Transverse colon (tissue), 4 donors: ENCODE measurements at regions of chr11 and their contacts with region 1.

Region 1: DNA sequence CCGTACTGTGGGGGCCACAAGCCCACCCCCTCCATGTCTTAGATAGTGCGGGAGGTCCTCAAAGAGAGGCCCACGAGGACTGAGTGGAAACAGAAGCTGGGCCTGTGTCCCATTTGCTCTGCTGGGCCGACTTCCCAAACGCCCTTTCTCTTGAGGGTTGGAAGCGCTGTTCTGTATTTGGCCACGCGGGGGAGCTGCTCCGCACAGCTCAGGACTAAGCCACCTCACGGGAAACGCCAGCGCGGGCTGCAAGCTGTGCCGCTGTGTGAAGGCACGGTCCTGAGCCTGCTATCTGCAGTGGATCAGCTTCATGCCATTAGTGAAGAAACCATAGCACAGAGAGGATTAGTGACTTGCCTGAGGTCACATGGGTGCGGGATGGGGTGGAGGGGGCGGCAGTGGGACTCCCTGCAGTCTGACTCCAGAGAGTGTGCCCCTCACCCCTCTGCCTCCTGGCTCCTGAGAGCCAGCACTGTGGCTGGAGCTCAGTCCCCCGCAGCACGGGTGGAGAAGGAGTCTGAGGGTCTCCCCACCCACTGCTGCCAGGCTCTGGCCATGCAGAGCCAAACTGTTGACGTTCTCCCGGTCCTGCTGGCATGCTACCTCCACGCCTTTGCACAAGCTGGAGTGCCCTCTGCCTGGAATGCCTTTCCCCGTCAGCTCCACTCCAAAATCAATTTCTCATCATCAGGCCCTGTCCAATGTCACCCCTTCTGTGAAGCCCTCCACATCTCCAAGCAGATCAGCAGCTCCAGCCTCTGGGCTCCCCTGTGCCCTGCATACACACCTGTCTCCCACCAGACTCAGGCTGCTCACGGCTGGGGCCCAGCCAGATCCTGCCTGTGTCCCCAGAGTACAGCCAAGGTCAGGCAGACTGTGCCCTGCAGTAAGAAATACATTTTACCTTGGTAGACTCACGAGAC is 51.5 kb upstream of the LRRC32 start:
- DNase-seq: peak; percentile 87
- H3K4me3 ChIP-seq: no peak overlapping the region
- H3K27ac ChIP-seq: no peak overlapping the region
- H3K4me1 ChIP-seq: peaks cover 0 to 7% (median 4%) of the 10 kb centered on the region in 4 donors
- H3K27me3 ChIP-seq: peaks cover 12% of the 10 kb centered on the region
- CTCF ChIP-seq: peak; percentile 75 to 91 (median 87)
- EP300 ChIP-seq: no peak
- POLR2A ChIP-seq: no peak

Region 2: DNA sequence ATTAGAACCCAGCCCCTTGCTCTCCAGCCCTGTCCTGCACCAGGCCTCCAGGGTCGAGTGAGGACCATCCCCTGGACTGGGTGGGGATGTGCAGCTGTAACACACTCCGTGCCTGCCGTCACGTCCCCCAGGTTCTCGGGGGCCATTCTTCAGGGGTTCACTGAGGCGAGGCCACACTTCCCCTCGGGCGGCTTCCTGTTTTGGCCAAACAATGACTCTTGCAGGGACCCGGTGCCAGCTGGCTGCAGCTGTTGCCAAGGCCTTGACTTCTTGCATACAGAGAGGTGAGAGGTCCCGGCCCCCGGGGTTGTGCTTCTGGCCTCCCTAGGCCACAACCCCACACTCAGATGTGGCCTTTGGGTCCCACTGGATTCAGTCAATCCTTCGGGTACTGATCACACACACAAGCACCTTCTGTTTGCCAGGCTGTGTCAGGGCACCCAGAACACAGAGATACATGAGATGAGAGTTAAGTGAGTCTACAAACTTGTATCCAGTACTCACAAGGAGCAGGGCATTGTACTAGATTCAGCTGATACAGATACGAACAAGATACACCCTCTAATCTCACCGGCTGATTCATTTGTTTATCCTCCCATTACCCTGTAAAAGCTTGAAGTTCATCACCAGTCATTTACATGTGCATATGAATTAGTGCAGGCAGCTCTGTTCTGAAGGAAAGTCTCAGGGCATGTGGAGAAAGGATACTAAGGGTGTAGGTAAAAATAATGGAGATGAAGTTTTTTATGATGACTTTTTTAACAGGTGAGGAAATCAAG is 84.3 kb before region 1 on chr11:
- in situ Hi-C with region 1: no loop called
- intact Hi-C with region 1: no loop called
- DNase-seq: peak; percentile 32
- H3K4me3 ChIP-seq: no peak overlapping the region
- H3K27ac ChIP-seq: no peak overlapping the region
- H3K4me1 ChIP-seq: peaks cover 0 to 6% (median 0%) of the 10 kb centered on the region in 4 donors
- H3K27me3 ChIP-seq: no peaks in the 10 kb centered on the region
- CTCF ChIP-seq: no peak
- EP300 ChIP-seq: no peak
- POLR2A ChIP-seq: no peak

Region 3: GRCh38 chr11:76744186-76745043 is 22.4 kb after region 1 on chr11:
- in situ Hi-C with region 1: no loop called
- intact Hi-C with region 1: loop called (anchors 1 kb)
- DNase-seq: peak; percentile 33
- H3K4me3 ChIP-seq: no peak overlapping the region
- H3K27ac ChIP-seq: peak overlapping the region in 3 of 4 donors; percentile 40 to 73 (median 61)
- H3K4me1 ChIP-seq: peaks cover 4 to 21% (median 13%) of the 10 kb centered on the region in 4 donors
- H3K27me3 ChIP-seq: no peaks in the 10 kb centered on the region
- CTCF ChIP-seq: no peak
- EP300 ChIP-seq: no peak
- POLR2A ChIP-seq: no peak

Region 4: DNA sequence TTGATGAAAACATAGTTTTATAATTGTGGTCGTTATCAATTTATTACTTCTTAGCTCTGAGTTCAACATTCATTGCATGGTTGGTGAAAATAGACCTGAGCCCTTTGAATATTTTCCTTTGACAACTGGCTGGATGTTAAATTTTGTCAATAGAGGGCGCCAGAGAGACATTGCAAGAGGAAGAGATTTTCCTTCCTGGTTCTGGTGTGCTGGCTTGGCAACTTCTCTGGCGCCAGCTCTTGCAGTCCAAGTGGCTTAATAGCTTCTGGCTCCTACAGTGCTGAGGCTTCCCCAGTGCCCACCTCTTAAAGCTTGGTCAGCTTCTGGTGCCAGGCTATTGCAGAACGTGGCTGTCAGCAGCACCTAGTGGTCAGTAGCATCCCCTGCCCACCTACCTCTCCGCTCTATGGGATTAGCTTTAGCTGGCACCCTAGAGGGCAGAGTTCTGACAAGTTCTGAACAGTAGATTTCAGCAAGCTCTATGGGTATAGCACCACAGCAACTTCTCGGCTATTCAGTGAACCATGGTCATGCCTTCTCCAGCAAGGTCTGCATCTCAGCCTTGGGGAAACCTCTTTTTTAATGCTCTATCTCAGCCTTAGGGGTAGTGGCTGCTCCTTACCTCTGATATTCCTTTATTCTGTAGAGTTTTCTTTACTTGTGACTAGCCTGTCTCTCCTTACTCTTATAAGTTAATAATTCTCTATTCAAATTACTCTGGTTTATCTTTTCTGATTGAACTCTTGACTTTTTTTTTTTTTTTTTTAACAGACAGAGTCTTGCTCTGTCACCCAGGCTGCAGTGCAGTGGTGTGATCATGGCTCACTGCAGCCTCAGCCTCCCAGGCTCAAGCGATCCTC is 198.1 kb after region 1 on chr11:
- in situ Hi-C with region 1: loop called in 1 of 4 experiments (anchors 25 kb)
- intact Hi-C with region 1: no loop called
- DNase-seq: peak; percentile 79
- H3K4me3 ChIP-seq: peak overlapping the region in 1 of 4 donors; percentile 33
- H3K27ac ChIP-seq: peak overlapping the region; percentile 54 to 83 (median 70)
- H3K4me1 ChIP-seq: peaks cover 3 to 32% (median 15%) of the 10 kb centered on the region in 4 donors
- H3K27me3 ChIP-seq: no peaks in the 10 kb centered on the region
- CTCF ChIP-seq: peak; percentile 84 to 92 (median 89)
- EP300 ChIP-seq: no peak
- POLR2A ChIP-seq: no peak